Heart left ventricle (tissue), 16 donors: ENCODE measurements at regions of chr4 and their contacts with region 1.

Region 1: DNA sequence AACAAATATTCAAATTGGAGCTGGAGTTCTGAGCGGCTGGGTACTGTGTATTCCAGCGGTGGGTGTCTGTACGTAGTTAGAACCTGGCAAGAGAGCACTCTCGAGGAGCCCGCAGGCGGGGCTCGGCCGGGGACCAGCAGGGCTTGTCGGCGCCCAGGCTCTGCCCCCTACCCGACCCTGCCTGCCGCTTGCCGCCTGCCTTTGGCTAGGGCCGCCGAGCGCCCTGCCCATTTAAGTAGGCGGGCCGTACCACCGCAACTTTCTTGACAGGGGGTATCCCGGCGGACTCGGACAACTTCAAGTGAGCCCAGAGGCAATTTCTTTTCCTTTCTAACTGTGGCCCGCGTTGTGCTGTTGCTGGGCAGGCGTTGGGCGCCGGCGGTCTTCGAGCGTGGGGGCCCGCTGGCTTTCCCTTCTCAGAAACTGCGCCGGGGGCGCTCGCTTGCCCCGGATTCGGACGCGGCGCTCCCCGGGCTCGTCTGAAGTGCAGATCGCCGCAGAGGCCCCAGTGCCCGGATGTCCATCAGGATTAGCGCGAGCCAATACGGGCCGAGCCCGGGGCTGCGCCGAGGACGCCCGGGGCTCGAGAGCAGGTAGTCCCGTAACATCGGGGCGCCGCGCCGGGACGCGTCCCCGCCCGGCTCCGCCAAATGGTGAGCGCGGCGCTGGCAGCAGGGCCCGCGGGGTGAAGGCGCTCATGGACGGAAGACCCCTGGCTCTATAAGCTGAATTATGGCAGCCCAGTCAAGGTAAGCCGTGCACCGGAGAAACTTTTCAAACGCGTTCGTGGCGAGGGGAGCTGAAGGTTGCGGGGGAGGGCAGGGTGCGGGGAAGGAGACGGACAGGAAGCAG is 72.1 kb downstream of the AFF1 start:
- DNase-seq: peak; percentile 94 to 97 (median 96)
- ATAC-seq: peak; percentile 87 to 96 (median 94)
- H3K4me3 ChIP-seq: peak overlapping the region; percentile 69 to 91 (median 80)
- H3K27ac ChIP-seq: peak overlapping the region; percentile 91 to 100 (median 98)
- H3K4me1 ChIP-seq: peaks cover 7 to 56% (median 48%) of the 10 kb centered on the region in 12 donors
- H3K27me3 ChIP-seq: no peaks in the 10 kb centered on the region
- CTCF ChIP-seq: peak in 6 of 12 donors; percentile 4 to 54 (median 36)
- POLR2A ChIP-seq: peak; percentile 74 to 94

Region 2: GRCh38 chr4:86927843-86928395 is 79.0 kb before region 1 on chr4:
- intact Hi-C with region 1: loop called in 2 of 10 experiments (anchors 5 kb)
- DNase-seq: peak in 1 of 5 donors; percentile 38
- ATAC-seq: peak in 3 of 4 donors; percentile 63 to 87 (median 73)
- H3K4me3 ChIP-seq: no peak overlapping the region
- H3K27ac ChIP-seq: peak overlapping the region in 3 of 12 donors; percentile 34 to 63 (median 55)
- H3K4me1 ChIP-seq: peaks cover 0 to 33% (median 0%) of the 10 kb centered on the region in 12 donors
- H3K27me3 ChIP-seq: no peaks in the 10 kb centered on the region
- CTCF ChIP-seq: no peak
- POLR2A ChIP-seq: no peak

Region 3: DNA sequence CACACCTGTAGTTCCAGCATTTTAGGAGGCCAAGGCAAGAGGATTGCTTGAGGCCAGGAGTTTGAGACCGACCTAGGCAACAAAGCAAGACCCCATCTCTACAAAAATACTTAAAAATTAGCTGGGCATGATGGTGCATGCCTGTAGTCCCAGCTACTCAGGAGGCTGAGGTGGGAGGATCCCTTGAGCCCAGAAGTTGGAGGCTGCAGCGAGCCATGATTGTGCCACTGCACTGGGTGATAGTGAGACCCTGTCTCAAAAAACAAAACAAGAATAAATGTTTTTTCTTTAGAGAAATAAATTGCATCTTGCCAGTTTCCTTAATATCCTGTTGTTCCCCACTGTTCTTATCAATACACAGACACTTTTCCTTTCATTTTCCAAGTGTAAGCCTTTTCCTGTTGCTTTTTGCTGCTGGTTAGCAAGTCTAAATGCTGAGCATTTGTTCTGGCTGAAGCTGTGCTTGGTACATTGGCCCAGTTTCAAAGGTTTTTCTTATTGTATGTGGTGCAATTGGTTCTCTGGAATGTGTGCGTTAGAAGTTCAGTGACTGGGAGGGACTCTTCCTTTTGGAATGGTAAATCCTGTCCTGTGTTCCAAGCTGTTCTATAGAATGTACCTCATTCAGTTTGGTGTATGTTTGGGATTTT is 26.1 kb after region 1 on chr4:
- intact Hi-C with region 1: loop called in 2 of 10 experiments (anchors 2 kb)
- DNase-seq: no peak
- ATAC-seq: peak in 3 of 4 donors; percentile 3 to 29 (median 21)
- H3K4me3 ChIP-seq: peak overlapping the region in 7 of 12 donors; percentile 3 to 22 (median 15)
- H3K27ac ChIP-seq: peak overlapping the region; percentile 67 to 92 (median 82)
- H3K4me1 ChIP-seq: peaks cover 60 to 100% (median 98%) of the 10 kb centered on the region in 12 donors
- H3K27me3 ChIP-seq: no peaks in the 10 kb centered on the region
- CTCF ChIP-seq: no peak
- POLR2A ChIP-seq: no peak

Region 4: DNA sequence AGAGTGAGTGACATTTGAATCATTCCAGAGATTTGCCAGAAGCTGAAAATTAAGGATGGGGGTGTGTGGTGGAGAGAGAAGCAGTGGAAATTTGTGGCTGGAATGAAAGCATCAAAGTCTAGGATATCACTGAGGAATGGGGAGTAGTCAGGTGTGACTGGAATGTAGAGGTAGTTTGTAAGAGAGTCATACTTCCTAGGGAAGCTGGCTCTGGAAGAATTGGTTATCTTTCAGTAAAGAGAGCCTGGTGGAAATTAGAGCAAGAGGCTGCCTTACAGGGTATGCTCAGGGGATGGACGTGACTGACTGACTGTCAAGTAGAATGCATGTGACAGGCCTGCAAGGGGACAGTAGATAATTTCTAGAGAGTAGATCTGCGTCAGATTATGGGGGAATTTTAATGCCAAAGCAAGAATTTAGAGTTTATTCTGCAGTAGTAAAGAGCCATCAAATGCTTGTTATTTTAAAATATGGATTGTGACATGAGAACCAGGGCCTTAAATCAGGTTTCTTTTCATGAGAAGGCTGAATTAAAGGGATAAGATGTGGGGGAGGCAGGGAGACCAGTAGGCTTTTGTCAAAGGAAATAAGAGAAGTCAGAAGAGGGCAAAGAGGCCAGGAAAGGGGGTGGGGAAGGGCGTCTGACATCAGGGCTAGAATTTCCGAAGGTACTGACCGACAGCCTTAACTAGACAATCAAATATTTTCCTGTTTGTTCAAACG is 37.8 kb after region 1 on chr4:
- intact Hi-C with region 1: loop called in 5 of 10 experiments (anchors 5 kb)
- DNase-seq: peak in 3 of 5 donors; percentile 50 to 59 (median 51)
- ATAC-seq: peak; percentile 21 to 80 (median 51)
- H3K4me3 ChIP-seq: peak overlapping the region in 9 of 12 donors; percentile 0 to 37 (median 25)
- H3K27ac ChIP-seq: peak overlapping the region; percentile 67 to 89 (median 84)
- H3K4me1 ChIP-seq: peaks cover 30 to 90% (median 69%) of the 10 kb centered on the region in 12 donors
- H3K27me3 ChIP-seq: no peaks in the 10 kb centered on the region
- CTCF ChIP-seq: no peak
- POLR2A ChIP-seq: no peak

Region 5: DNA sequence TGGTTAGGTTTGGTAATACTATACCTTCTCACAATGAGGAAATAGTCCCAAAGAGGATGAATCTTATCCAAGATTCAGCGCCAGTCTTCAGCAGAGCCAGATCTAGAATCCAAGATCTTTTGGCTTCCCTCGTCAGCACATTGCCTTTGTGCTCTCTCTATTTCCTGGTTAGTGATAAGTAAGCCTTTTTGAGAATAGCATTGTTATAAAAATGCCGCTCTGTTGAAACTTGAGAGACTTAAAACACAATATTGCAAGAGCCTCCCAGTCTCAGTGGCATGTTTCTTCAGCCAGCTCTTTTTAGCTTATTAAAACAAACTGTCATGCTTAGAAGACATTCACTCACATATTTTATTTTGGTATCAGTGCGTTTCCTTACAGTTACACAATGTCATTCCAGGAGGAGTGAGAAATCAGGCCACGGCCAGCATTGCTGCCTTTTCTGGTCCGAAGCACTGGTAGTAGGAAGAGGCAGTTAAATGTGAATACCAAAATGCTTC is 72.1 kb after region 1 on chr4:
- intact Hi-C with region 1: loop called in 4 of 10 experiments (anchors 5 kb)
- DNase-seq: peak in 2 of 5 donors; percentile 50 to 59
- ATAC-seq: peak; percentile 58 to 79 (median 74)
- H3K4me3 ChIP-seq: peak overlapping the region in 7 of 12 donors; percentile 11 to 26 (median 13)
- H3K27ac ChIP-seq: peak overlapping the region; percentile 64 to 81 (median 76)
- H3K4me1 ChIP-seq: peaks cover 13 to 99% (median 78%) of the 10 kb centered on the region in 12 donors
- H3K27me3 ChIP-seq: no peaks in the 10 kb centered on the region
- CTCF ChIP-seq: no peak
- POLR2A ChIP-seq: no peak

Region 6: DNA sequence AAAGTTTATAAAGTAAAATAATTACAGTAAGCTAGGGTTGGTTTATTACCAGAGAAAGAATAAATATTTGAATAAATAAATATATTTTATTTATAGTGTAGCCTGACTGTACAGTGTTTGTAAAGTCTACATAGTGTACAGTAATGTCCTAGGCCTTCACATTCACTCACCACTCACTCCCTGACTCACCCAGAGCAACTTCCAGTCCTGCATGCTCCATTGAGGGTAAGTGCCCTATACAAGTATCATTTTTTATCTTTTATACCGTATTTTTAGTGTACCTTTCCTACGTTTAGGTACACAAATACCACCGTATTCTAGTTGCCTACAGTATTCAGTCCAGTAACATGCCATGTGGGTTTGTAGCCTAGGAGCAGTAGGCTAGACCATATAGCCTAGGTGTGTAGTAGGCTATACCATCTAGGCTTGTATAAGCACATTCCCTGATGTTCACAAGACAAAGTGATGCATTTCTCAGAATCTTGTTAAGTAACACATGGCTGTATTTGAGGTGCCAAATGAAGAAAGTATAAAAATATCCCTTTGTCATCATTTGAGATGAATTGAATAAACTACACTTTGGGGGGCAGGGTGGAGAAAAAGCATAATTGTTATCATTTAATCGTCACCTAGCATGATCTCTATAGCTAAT is 228.2 kb after region 1 on chr4:
- intact Hi-C with region 1: loop called in 1 of 10 experiments (anchors 5 kb)
- DNase-seq: no peak
- ATAC-seq: no peak
- H3K4me3 ChIP-seq: peak overlapping the region in 11 of 12 donors; percentile 30 to 63 (median 53)
- H3K27ac ChIP-seq: peak overlapping the region in 2 of 12 donors; percentile 46 to 69
- H3K4me1 ChIP-seq: peaks cover 0 to 21% (median 3%) of the 10 kb centered on the region in 12 donors
- H3K27me3 ChIP-seq: no peaks in the 10 kb centered on the region
- CTCF ChIP-seq: no peak
- POLR2A ChIP-seq: no peak